ENCODE measurements at regions of chr12 and their contacts with region 1.

Region 1: DNA sequence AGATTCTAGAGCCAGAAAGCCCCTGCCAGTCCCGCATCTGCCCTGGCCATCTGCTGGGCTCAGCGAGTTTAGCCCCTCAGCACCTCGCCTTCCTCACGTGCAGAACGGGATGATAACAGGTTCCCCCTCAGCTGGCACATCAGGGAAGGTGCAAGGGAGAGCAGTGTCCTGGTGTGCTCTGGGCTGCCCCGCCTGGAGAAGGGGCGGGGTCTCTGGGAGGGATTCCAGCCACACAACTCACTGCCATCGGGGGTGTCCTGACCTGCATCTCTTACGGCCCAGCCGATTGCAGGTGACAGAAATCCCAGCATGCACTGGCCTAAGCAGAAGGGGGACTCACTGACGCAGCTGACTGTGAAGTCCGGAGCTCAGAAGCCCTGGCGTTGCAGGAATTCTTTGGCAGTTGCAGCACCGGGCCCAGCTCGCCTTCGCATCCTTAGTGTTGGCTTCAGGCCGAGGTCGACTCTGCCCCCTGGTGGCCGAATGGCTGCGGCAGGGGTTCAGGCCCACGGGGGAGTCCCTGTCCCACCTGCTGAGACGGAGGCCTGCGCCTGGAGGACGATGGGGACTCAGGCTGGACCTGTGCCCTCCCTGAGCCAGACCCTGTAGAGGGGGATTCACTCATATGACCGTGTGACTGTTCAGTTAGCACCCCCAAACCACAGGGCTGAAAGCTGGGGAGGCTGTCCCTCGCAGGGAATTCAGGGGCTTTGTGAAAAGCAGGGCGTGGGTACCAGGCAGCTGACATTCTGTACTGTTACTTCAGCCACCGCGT is 178.6 kb downstream of the ADGRD1 start:
- DNase-seq: peak; percentile 13
- ATAC-seq: peak; percentile 79
- H3K4me3 ChIP-seq: no peak overlapping the region
- H3K27ac ChIP-seq: no peak overlapping the region
- H3K4me1 ChIP-seq: no peaks in the 10 kb centered on the region; the same call in 1 of the 2 replicates
- H3K27me3 ChIP-seq: no peaks in the 10 kb centered on the region
- CTCF ChIP-seq: peak; percentile 93

Region 2: DNA sequence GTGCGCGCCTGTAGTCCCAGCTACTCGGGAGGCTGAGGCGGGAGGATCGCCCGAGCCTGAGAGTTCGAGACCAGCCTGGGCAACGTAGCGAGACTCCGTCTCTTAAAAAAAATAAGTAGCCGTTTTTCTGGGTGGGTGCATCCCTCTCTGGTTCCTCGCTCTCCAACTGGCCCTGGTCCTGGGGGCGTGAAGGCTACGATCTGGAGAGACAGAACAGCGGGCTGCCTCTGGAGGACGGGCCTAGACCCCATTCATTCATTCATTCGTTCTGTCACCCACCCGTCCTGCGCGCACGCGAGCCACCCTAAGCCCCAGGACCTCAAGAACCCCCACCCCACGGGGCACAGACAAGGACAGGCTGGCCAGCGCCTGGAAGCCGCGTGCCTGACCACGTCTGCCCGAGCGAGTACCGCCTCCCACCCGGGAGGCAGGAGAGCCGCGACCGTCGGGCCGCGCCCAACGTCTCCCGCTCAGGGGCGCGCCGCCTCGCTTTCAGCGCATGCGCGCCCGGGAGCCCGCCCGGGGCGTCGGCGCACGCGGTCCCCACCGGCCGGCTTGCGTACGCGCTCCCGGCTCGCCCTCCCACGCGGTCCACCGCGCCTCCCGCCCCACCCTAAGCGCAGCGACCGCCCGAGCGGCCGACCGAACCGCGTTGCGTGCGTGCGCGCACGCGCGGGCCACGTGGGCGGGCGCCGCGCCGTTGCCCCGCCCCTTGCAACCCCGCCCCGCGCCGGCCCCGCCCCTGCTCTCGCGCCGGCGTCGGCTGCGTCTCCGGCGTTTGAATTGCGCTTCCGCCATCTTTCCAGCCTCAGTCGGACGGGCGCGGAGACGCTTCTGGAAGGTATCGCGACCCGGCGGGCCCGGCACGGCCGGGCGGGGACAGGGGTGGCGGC is 260.8 kb before region 1 on chr12 and contains the start of gene RAN:
- CTCF ChIA-PET with region 1: no interaction called
- POLR2A ChIA-PET with region 1: no interaction called
- in situ Hi-C with region 1: no loop called
- intact Hi-C with region 1: no loop called
- DNase-seq: peak; percentile 32
- ATAC-seq: peak; percentile 93
- H3K4me3 ChIP-seq: peak within 1 kb of the TSS; percentile 86 to 94
- H3K27ac ChIP-seq: peak within 1 kb of the TSS; percentile 96
- H3K4me1 ChIP-seq: peaks cover 25% of the 10 kb centered on the region
- H3K27me3 ChIP-seq: no peaks in the 10 kb centered on the region
- CTCF ChIP-seq: no peak
- total RNA-seq, gene RAN: 1,193 TPM

Region 3: GRCh38 chr12:130916251-130916911 is 215.9 kb before region 1 on chr12:
- CTCF ChIA-PET with region 1: interaction called, 3 read pairs
- POLR2A ChIA-PET with region 1: no interaction called
- in situ Hi-C with region 1: no loop called
- intact Hi-C with region 1: loop called (anchors 2 kb)
- DNase-seq: peak; percentile 28
- ATAC-seq: peak; percentile 93
- H3K4me3 ChIP-seq: peak overlapping the region in 1 of 2 experiments; percentile 37; a peak in 3 of 4 replicates
- H3K27ac ChIP-seq: no peak overlapping the region
- H3K4me1 ChIP-seq: peaks cover 12% of the 10 kb centered on the region
- H3K27me3 ChIP-seq: peaks cover 44% of the 10 kb centered on the region
- CTCF ChIP-seq: peak; percentile 96

Measured in Panc1 (cell line).